ENCODE measurements at regions of chr19 and their contacts with region 1.

Region 1: DNA sequence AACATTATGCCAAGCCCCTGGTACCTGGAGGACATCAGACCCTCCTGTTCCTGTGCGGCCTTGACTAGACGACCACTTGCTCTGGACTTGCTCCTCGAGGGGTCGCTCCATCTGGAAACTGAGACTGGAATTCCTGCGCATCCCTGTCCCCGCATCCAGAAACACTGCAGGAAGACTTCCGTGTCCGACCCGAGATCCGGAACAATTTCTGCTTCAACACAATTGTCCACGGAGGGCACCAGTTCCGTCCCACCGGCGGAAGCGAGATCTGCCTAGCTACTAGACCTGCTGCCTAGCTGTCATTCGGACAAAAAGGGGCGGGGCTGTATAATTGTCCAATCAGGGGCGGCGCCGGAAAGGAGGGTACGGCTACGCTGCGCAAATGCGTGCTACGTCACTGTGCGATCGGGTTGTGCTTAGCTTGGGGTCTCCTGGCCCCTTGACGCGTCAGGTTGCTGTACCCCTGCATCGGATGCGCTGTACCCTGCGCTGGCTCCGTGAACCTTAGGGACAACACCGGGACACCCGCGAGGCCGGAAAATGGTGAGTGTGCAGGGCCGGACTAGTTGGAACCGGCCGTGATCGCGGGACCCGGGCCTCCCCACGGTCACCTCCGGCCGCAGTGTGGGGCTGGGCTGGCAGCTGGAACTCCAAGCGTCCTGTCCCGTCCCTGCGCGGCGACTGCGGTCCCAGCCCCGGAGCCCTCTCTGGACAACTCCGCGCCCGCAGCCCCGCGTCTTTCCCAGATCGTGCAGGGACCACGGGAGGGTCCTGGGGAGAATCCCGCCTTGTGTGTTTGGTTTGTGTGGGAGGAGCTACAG is at the starts of genes ZNF490 and ZNF791:
- DNase-seq: peak; percentile 99
- H3K4me3 Mint-ChIP-seq: peak within 1 kb of the TSS; percentile 96
- H3K27ac Mint-ChIP-seq: peak within 1 kb of the TSS; percentile 97
- H3K4me1 Mint-ChIP-seq: no peaks in the 10 kb centered on the region
- H3K27me3 Mint-ChIP-seq: no peaks in the 10 kb centered on the region
- CTCF ChIP-seq: no peak
- total RNA-seq, gene ZNF490: 6.9 and 8.4 TPM in 2 replicates
- total RNA-seq, gene ZNF791: 23.7 and 40.2 TPM in 2 replicates

Region 2: GRCh38 chr19:12162882-12163806 is 447.6 kb before region 1 on chr19 and contains the start of gene ZNF136:
- CTCF ChIA-PET with region 1: no interaction called
- POLR2A ChIA-PET with region 1: interaction called, 11 read pairs
- intact Hi-C with region 1: no loop called
- DNase-seq: peak; percentile 96
- H3K4me3 Mint-ChIP-seq: peak within 1 kb of the TSS; percentile 83
- H3K27ac Mint-ChIP-seq: peak within 1 kb of the TSS; percentile 97
- H3K4me1 Mint-ChIP-seq: peaks cover 8% of the 10 kb centered on the region
- H3K27me3 Mint-ChIP-seq: no peaks in the 10 kb centered on the region
- CTCF ChIP-seq: no peak
- total RNA-seq, gene ZNF136: 3.7 and 4.3 TPM in 2 replicates

Region 3: GRCh38 chr19:12440541-12441316 is 170.0 kb before region 1 on chr19 and contains the start of gene ZNF443:
- CTCF ChIA-PET with region 1: no interaction called
- POLR2A ChIA-PET with region 1: interaction called, 6 read pairs
- intact Hi-C with region 1: loop called (anchors 2 kb)
- DNase-seq: peak; percentile 99
- H3K4me3 Mint-ChIP-seq: peak within 1 kb of the TSS; percentile 92
- H3K27ac Mint-ChIP-seq: peak within 1 kb of the TSS; percentile 72
- H3K4me1 Mint-ChIP-seq: no peaks in the 10 kb centered on the region
- H3K27me3 Mint-ChIP-seq: no peaks in the 10 kb centered on the region
- CTCF ChIP-seq: no peak
- total RNA-seq, gene ZNF443: 0.79 and 1.6 TPM in 2 replicates

Region 4: DNA sequence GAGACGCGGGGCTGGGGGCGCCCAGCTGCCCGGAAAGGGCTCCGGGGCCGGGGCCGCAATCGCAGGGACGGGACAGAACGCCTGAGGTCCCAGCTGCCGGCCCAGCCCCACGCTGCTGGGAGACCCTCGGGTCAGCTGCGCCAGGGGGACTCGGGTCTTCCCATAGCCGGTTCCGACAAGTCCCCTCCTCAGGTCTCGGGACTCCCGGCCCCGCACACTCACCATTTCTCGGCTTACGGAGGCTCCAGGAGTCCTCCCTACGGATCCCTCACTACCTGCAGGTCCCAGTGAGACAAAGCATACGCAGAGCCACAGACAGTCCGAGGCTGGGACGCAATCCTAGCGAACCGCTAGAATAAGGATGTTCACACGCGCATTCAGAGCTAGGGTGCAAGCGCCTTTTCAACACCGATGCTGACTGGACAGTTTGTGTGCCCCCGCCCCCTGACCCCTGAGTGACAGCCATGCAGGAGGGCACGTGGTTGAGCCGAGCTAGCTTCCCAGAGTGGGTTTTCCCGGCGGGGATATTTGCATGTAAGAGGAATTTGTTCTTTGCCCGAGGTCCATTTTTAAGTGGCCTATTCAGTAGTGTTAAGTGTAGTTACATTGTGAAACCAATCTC is 13.7 kb before region 1 on chr19:
- CTCF ChIA-PET with region 1: interaction called, 3 read pairs
- POLR2A ChIA-PET with region 1: interaction called, 10 read pairs
- intact Hi-C with region 1: no loop called
- DNase-seq: no peak
- H3K4me3 Mint-ChIP-seq: no peak overlapping the region
- H3K27ac Mint-ChIP-seq: no peak overlapping the region
- H3K4me1 Mint-ChIP-seq: no peaks in the 10 kb centered on the region
- H3K27me3 Mint-ChIP-seq: no peaks in the 10 kb centered on the region
- CTCF ChIP-seq: no peak

Region 5: GRCh38 chr19:12666265-12667048 is 55.7 kb after region 1 on chr19 and contains the starts of genes MAN2B1 and WDR83:
- CTCF ChIA-PET with region 1: no interaction called
- POLR2A ChIA-PET with region 1: interaction called, 32 read pairs
- intact Hi-C with region 1: loop called (anchors 2 kb)
- DNase-seq: peak; percentile 78
- H3K4me3 Mint-ChIP-seq: peak within 1 kb of the TSS; percentile 92
- H3K27ac Mint-ChIP-seq: peak within 1 kb of the TSS; percentile 89
- H3K4me1 Mint-ChIP-seq: peaks cover 7% of the 10 kb centered on the region
- H3K27me3 Mint-ChIP-seq: no peaks in the 10 kb centered on the region
- CTCF ChIP-seq: no peak
- total RNA-seq, gene MAN2B1: 53.8 and 67.0 TPM in 2 replicates
- total RNA-seq, gene WDR83: 9.3 and 11.7 TPM in 2 replicates

Measured in MCF 10A (cell line).